ENCODE measurements at regions of chr12 and their contacts with region 1.

Region 1: GRCh38 chr12:64796208-64796845 is 28.1 kb upstream of the TBC1D30 start:
- DNase-seq: peak; percentile 44
- ATAC-seq: peak; percentile 79
- H3K4me3 Mint-ChIP-seq: no peak overlapping the region
- H3K27ac Mint-ChIP-seq: no peak overlapping the region
- H3K4me1 Mint-ChIP-seq: peaks cover 9% of the 10 kb centered on the region; the same call in 1 of the 2 replicates
- H3K27me3 Mint-ChIP-seq: peaks cover 4% of the 10 kb centered on the region; the same call in 1 of the 2 replicates
- CTCF ChIP-seq: peak; percentile 50; the same call in 1 of the 2 replicates

Region 2: GRCh38 chr12:64431791-64432190 is 364.5 kb before region 1 on chr12:
- CTCF ChIA-PET with region 1: no interaction called
- POLR2A ChIA-PET with region 1: no interaction called
- DNase-seq: no peak
- ATAC-seq: no peak
- H3K4me3 Mint-ChIP-seq: no peak overlapping the region
- H3K27ac Mint-ChIP-seq: no peak overlapping the region
- H3K4me1 Mint-ChIP-seq: no peaks in the 10 kb centered on the region
- H3K27me3 Mint-ChIP-seq: no peaks in the 10 kb centered on the region
- CTCF ChIP-seq: no peak

Region 3: DNA sequence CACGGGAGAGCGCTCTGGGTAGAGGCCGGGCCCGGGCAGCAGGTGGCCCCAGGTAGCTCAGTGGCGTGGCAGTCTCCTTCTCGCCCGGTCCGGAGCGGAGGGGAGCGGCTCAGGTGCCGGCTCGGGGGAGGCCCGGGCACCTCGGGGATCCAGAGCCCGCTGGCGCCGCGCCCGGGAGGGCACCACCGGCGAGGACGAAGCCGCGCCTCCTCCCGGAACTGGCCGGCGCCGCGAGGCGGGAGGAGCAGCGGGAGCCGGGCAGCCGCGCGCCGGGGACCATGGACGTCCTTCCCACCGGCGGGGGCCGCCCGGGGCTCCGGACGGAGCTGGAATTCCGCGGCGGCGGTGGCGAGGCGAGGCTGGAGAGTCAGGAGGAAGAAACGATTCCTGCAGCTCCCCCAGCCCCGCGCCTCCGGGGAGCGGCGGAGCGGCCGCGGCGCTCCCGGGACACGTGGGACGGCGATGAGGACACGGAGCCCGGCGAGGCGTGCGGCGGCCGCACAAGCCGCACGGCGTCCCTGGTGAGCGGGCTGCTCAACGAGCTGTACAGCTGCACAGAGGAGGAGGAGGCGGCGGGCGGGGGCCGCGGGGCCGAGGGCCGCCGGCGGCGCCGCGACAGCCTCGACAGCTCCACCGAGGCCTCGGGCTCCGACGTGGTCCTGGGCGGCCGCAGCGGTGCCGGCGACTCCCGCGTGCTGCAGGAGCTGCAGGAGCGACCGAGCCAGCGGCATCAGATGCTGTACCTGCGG is 15.6 kb before region 1 on chr12:
- CTCF ChIA-PET with region 1: interaction called, 40 read pairs
- POLR2A ChIA-PET with region 1: no interaction called
- DNase-seq: peak; percentile 53
- ATAC-seq: peak; percentile 74
- H3K4me3 Mint-ChIP-seq: peak overlapping the region; percentile 86
- H3K27ac Mint-ChIP-seq: no peak overlapping the region
- H3K4me1 Mint-ChIP-seq: peaks cover 11% of the 10 kb centered on the region
- H3K27me3 Mint-ChIP-seq: peaks cover 76% of the 10 kb centered on the region
- CTCF ChIP-seq: no peak

Region 4: GRCh38 chr12:64806593-64807460 is 10.5 kb after region 1 on chr12:
- CTCF ChIA-PET with region 1: interaction called, 20 read pairs
- POLR2A ChIA-PET with region 1: no interaction called
- DNase-seq: no peak
- ATAC-seq: no peak
- H3K4me3 Mint-ChIP-seq: no peak overlapping the region
- H3K27ac Mint-ChIP-seq: no peak overlapping the region
- H3K4me1 Mint-ChIP-seq: no peaks in the 10 kb centered on the region
- H3K27me3 Mint-ChIP-seq: no peaks in the 10 kb centered on the region; the same call in 1 of the 2 replicates
- CTCF ChIP-seq: no peak

Region 5: DNA sequence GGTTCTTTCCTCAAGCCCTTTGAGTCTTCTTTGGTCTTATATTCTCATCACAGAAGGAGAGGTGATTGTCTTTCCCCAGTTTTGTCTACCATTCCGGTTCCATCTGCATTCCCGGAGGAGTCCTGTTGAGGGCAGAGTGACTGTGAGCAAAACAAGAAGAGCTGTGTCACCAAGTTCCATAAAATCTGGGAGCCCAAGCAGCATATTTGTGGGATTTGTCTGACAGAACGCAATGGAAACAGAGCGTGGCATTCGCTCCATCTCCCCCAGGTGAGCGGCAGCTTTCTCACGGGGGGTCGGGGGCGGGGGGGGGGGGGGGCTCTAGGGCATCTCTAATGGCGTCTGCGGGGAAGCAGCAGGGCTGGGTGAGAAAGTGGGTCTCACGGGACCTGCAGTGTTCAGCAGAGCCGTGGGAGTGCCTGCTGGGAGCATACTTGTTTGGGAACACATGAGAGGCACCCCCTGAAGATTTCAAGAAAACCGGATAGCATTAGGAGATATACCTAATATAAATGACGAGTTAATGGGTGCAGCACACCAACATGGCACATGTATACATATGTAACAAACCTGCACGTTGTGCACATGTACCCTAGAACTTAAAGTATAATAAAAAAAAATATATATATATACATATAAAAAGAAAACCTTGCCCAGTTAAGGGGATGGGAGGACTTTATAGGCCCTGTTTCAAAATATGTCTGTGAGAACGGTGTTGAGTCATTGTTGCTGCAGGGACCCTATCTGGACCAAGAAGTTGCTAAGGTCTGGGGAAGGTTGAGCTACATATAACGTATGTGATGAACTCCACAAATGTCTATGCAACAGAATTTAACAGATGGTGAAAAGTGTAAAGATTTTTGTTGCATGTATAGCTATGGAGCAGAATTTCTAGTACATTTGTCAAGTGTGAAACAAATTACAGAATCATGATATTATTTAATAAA is 87.5 kb after region 1 on chr12:
- CTCF ChIA-PET with region 1: interaction called, 33 read pairs
- POLR2A ChIA-PET with region 1: no interaction called
- DNase-seq: no peak
- ATAC-seq: peak; percentile 88
- H3K4me3 Mint-ChIP-seq: no peak overlapping the region
- H3K27ac Mint-ChIP-seq: 0 out of 2 replicates have a peak overlapping the region, but pooled peaks have one; percentile 8
- H3K4me1 Mint-ChIP-seq: peaks cover 11% of the 10 kb centered on the region
- H3K27me3 Mint-ChIP-seq: peaks cover 36% of the 10 kb centered on the region
- CTCF ChIP-seq: no peak

Region 6: DNA sequence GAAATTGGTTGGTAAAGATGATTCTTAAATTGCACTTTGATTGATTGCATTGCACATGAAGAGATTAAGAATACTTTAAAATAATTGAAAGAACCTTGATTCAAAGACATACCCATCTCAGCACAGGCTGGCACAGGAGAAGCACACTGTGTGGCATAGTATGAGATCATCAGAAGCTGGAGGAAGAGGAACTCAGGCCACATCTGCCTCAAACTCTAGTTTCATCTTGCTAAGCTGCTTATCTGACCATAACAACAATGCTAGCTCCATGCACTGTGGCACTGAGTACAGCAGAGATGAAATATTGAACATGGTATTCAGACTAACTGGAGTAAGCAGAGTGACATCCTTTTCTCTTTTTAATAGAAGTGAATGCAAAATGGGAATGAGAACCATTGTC is 127.2 kb after region 1 on chr12:
- CTCF ChIA-PET with region 1: interaction called, 10 read pairs
- POLR2A ChIA-PET with region 1: no interaction called
- DNase-seq: no peak
- ATAC-seq: no peak
- H3K4me3 Mint-ChIP-seq: no peak overlapping the region
- H3K27ac Mint-ChIP-seq: no peak overlapping the region
- H3K4me1 Mint-ChIP-seq: peaks cover 25% of the 10 kb centered on the region
- H3K27me3 Mint-ChIP-seq: no peaks in the 10 kb centered on the region
- CTCF ChIP-seq: no peak

Region 7: GRCh38 chr12:65106948-65107347 is 310.6 kb after region 1 on chr12:
- CTCF ChIA-PET with region 1: interaction called, 14 read pairs
- POLR2A ChIA-PET with region 1: no interaction called
- DNase-seq: no peak
- ATAC-seq: no peak
- H3K4me3 Mint-ChIP-seq: no peak overlapping the region
- H3K27ac Mint-ChIP-seq: no peak overlapping the region
- H3K4me1 Mint-ChIP-seq: peaks cover 9% of the 10 kb centered on the region
- H3K27me3 Mint-ChIP-seq: peaks cover 2% of the 10 kb centered on the region; the same call in 1 of the 2 replicates
- CTCF ChIP-seq: no peak